Posterior cingulate gyrus (tissue), 11 donors: ENCODE measurements at regions of chr4 and their contacts with region 1.

Region 1: DNA sequence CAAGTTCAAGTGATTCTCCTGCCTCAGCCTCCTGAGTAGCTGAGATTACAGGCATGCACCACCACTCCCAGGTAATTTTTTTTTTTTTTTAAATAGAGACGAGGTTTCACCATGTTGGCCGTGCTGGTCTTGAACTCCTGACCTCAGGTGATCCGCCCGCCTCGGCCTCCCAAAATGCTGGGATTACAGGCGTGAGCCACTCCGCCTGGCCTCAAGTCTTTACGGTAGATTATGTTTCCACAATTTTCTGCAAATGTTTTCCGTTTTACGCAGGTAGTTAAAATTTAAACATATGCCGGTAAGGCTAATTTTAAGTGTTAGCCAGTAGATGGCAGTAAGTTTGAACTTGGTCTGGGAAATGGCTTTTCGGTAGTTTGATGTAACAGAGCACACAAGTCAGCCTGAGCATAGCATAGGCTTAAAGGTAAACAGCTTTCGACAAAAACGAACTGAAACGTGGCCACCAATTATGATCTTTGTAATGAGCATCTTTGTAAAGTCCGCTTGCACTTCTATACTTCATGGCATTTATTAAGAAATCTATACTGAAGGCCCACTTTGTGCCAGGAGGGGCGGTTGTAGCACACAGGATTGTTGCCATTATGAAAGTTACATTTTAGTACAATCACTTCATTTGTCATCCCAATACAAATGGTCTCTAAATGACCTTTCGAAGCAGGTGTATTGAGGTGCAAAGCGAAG is 31.1 kb downstream of the CCKAR start:
- DNase-seq: no peak

Region 2: DNA sequence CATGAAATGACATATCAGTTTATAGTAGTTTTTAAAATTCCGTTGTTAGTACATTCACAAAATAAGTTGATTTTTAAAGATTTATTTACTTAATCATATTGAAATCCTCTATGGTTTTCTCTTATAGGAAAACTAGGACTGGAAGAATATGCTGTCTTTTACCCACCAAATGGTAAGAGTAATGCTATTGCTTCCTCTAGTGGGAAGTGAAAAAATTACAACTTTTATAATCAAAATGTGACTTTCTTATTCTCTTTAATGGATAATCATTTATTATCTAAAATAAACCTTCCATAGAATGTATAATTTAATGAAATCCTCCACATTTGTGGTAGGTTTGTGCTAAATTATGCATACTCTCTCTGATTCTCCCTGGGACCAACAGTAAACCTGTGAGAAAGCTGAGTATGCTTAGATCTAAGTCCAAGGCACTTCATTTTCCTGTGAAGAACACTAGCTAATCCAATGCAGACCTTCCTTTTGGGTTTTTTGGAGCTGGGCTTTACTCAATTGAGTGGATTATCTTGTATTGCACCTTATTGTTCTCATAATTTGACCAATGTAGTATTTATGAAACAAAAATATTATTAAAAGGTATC is 260.8 kb after region 1 on chr4:
- intact Hi-C with region 1: loop called (anchors 10 kb)
- DNase-seq: no peak

Region 3: GRCh38 chr4:27000820-27001219 is 541.6 kb after region 1 on chr4:
- intact Hi-C with region 1: loop called (anchors 5 kb)
- DNase-seq: no peak